GM12878 (cell line): ENCODE measurements at regions of chr13 and their contacts with region 1.

Region 1: GRCh38 chr13:40777166-40777808 is 6.3 kb upstream of the MRPS31 start:
- DNase-seq: no peak
- ATAC-seq: peak; percentile 95
- H3K4me3 ChIP-seq: no peak overlapping the region
- H3K27ac ChIP-seq: peak overlapping the region; percentile 17; the same call in 1 of the 2 replicates
- H3K4me1 ChIP-seq: peaks cover 11% of the 10 kb centered on the region
- H3K27me3 ChIP-seq: no peaks in the 10 kb centered on the region
- CTCF ChIP-seq: peak; percentile 53 to 60 (median 57)
- EP300 ChIP-seq: no peak
- POLR2A ChIP-seq: no peak
- RAD21 ChIP-seq: peak; percentile 73

Region 2: DNA sequence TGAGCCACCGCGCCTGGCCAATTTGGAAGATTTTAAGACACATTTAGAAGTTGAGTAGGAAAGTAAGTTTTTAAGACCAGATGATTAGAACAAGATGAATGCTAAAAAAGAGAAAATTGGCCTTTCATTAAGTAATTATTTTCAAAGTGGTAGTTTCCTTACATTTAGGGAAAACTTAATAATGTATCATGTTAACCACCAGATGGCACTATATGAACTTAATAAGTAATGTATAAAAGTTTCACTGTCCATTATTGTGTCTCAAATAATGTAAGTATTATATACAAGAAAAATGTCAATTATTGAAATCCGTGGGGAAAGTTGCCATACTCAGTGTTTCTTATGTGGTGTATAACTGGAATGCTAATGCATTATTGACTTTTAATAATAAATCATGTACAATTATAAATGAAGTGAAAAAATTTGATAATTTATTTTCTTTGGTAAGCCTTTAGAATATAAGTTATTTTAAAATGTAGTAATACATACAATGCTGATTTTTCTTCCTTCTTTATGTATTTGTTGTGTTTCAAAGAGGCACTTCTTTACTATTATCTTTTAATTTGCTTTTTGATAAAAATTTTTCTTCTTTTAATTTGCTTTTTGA is 1092.7 kb before region 1 on chr13:
- CTCF ChIA-PET with region 1: interaction called, 19 read pairs
- POLR2A ChIA-PET with region 1: no interaction called
- RAD21 ChIA-PET with region 1: interaction called, 3 read pairs
- SMC1A ChIA-PET with region 1: interaction called, 13 read pairs
- in situ Hi-C with region 1: no loop called
- intact Hi-C with region 1: loop called (anchors 5 kb)
- DNase-seq: no peak
- ATAC-seq: peak; percentile 60
- H3K4me3 ChIP-seq: no peak overlapping the region
- H3K27ac ChIP-seq: no peak overlapping the region
- H3K4me1 ChIP-seq: peaks cover 6% of the 10 kb centered on the region; the same call in 1 of the 2 replicates
- H3K27me3 ChIP-seq: no peaks in the 10 kb centered on the region
- CTCF ChIP-seq: peak in 1 of 3 experiments; percentile 18; a peak in 2 of 6 replicates
- EP300 ChIP-seq: no peak
- POLR2A ChIP-seq: no peak
- RAD21 ChIP-seq: peak; percentile 22; the same call in 1 of the 2 replicates

Region 3: DNA sequence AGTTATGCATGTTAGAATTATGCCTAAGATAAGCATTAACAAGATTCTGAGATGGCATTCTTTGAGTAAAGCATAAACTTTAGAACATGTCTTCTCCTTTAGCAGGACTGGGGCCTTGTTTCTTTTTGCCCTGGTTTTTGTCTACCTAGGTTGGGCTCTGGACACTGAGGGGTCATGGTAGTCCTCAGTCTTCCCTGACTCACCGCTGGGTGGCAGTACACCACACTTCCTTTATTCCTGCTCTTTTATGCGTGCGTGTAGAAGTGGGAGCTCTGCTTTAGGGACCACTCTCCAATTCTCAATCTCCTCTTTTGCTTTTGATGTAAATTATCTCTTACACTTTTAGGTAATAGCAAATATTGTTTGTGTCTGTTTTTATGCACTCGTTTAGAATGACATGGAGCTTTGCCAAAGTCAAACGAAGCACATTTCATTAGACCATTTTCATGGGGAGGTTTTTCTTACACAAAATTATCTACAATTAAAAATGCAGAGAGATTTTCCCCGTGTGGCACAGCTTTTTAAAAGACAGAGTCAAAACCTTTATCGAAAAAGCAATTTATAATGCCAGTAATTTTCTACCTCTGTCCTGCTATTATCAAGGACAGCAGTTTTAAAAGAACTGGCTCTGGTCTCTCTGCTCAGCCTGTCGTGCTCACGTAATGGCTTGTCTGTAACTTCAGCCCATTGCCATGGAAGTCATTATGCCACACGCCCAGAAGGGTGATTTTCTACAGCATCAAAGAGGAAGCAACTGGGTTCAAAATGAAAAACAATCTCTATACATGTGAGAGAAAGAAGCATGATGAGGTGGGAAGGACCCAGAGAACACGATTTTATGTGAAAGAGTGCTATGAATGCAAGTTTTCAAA is 707.9 kb before region 1 on chr13:
- CTCF ChIA-PET with region 1: interaction called, 28 read pairs
- POLR2A ChIA-PET with region 1: no interaction called
- RAD21 ChIA-PET with region 1: interaction called, 10 read pairs
- SMC1A ChIA-PET with region 1: interaction called, 10 read pairs
- in situ Hi-C with region 1: loop called (anchors 5 kb)
- intact Hi-C with region 1: loop called (anchors 5 kb)
- DNase-seq: no peak
- ATAC-seq: peak; percentile 92
- H3K4me3 ChIP-seq: no peak overlapping the region
- H3K27ac ChIP-seq: no peak overlapping the region
- H3K4me1 ChIP-seq: no peaks in the 10 kb centered on the region
- H3K27me3 ChIP-seq: peaks cover 0 to 8% of the 10 kb centered on the region in 2 experiments; a peak in 1 of 4 replicates
- CTCF ChIP-seq: peak; percentile 76 to 81 (median 79)
- EP300 ChIP-seq: no peak
- POLR2A ChIP-seq: no peak
- RAD21 ChIP-seq: peak; percentile 82

Region 4: DNA sequence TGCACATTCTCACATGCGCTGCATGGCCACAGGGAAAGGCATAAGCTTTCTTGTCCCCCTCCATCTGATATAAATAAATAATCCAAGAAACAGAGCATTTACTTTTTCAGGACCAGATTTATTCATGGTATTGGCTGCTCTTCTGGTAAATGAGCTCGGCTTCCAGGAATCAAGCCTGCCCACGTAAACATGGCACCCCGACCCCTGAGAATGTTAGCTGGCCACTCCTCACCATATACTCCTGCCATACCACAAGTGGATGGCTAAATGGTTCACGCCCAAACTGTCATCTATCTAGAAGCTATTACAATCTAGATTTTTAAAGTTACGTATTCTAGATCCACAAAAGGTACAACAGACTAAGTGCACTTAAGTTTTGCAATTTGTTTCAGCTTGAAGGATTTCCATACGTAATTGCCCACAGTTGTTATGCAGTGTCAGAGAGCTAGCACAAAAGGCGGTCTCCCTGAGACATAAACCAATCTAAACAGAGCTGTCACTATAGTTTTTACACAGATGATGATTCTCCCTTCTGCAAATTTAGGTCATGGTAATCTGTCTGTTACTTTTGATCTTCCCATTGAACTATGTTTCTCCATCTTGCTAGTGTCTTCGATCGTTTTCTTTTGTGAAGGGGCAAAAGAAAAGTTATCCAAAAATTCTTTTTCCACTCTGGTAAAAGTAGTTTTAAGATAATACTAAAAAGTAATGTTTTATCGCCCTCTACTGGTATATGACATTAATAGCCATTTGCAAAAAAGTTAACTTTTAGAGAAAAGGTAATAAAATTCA is 94.6 kb before region 1 on chr13:
- CTCF ChIA-PET with region 1: interaction called, 26 read pairs
- POLR2A ChIA-PET with region 1: no interaction called
- RAD21 ChIA-PET with region 1: interaction called, 19 read pairs
- SMC1A ChIA-PET with region 1: interaction called, 12 read pairs
- in situ Hi-C with region 1: no loop called
- intact Hi-C with region 1: loop called (anchors 5 kb)
- DNase-seq: no peak
- ATAC-seq: peak; percentile 65
- H3K4me3 ChIP-seq: no peak overlapping the region
- H3K27ac ChIP-seq: no peak overlapping the region
- H3K4me1 ChIP-seq: no peaks in the 10 kb centered on the region
- H3K27me3 ChIP-seq: peaks cover 0 to 3% of the 10 kb centered on the region in 2 experiments; a peak in 1 of 4 replicates
- CTCF ChIP-seq: peak in 1 of 3 experiments; percentile 48; a peak in 4 of 6 replicates
- EP300 ChIP-seq: no peak; a peak in 1 of 4 replicates
- POLR2A ChIP-seq: no peak
- RAD21 ChIP-seq: peak; percentile 55

Region 5: GRCh38 chr13:40789275-40790133 is 12.2 kb after region 1 on chr13 and contains the start of gene SLC25A15:
- CTCF ChIA-PET with region 1: interaction called, 36 read pairs
- POLR2A ChIA-PET with region 1: interaction called, 3 read pairs
- RAD21 ChIA-PET with region 1: interaction called, 8 read pairs
- SMC1A ChIA-PET with region 1: interaction called, 8 read pairs
- in situ Hi-C with region 1: no loop called
- intact Hi-C with region 1: no loop called
- DNase-seq: no peak
- ATAC-seq: peak; percentile 94
- H3K4me3 ChIP-seq: peak within 1 kb of the TSS; percentile 83
- H3K27ac ChIP-seq: peak within 1 kb of the TSS; percentile 56
- H3K4me1 ChIP-seq: peaks cover 17% of the 10 kb centered on the region
- H3K27me3 ChIP-seq: no peaks in the 10 kb centered on the region
- CTCF ChIP-seq: peak in 2 of 3 experiments; percentile 33 to 47; a peak in 3 of 6 replicates
- EP300 ChIP-seq: 0 out of 4 replicates have a peak, but pooled peaks of 1 of the 2 experiments have one; percentile 23
- POLR2A ChIP-seq: peak; percentile 76
- RAD21 ChIP-seq: peak; percentile 42
- polyA plus RNA-seq, gene SLC25A15: 2.7 to 3.6 TPM

Region 6: DNA sequence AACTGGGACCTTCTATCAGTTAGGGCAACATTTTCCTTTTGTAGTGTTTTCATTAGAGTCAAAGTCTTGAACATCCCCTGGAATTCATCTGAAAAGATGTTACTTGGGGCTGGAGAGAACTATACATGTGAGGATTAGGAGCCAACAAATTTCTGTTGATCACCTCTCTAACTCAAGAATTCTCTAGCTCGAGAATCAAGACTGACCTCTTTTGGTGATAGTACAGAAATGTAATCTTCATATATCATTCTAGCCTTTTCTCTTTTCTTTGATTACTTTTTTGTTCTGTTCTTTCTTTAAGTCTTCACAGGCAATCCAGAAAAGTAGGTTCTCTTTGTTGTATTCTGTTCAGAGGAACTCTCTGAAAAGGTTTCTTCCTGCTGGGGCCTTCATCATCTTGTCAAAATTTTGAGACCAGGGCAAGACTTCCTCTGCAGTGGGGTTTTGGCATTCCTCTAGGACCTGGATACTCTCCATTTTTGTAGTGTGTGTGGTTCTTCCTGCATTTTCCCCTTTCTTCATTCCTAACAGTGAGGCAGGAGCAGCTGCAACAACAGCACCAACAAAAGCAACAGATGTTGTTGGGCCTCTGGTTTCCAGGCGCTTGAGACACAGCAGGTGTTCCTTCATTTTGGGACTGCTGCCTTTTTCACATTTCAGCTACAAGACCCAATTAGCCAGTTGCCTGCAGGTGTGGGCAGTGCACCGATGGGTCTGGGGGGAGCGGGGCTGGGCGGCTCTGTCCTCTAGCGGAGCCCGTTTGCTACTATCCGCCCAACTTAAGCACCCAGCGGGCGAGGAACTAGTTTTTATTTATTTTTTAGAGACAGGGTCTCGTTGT is 215.6 kb after region 1 on chr13:
- CTCF ChIA-PET with region 1: interaction called, 18 read pairs
- POLR2A ChIA-PET with region 1: no interaction called
- RAD21 ChIA-PET with region 1: interaction called, 15 read pairs
- SMC1A ChIA-PET with region 1: interaction called, 11 read pairs
- in situ Hi-C with region 1: no loop called
- intact Hi-C with region 1: no loop called
- DNase-seq: no peak
- ATAC-seq: peak; percentile 34
- H3K4me3 ChIP-seq: no peak overlapping the region; the same call in 1 of the 2 replicates
- H3K27ac ChIP-seq: peak overlapping the region; percentile 92
- H3K4me1 ChIP-seq: peaks cover 46% of the 10 kb centered on the region
- H3K27me3 ChIP-seq: no peaks in the 10 kb centered on the region
- CTCF ChIP-seq: peak; percentile 10 to 49 (median 12); a peak in 4 of 6 replicates
- EP300 ChIP-seq: no peak
- POLR2A ChIP-seq: no peak
- RAD21 ChIP-seq: peak; percentile 51

Region 7: GRCh38 chr13:41720839-41721561 is 943.7 kb after region 1 on chr13:
- CTCF ChIA-PET with region 1: no interaction called
- POLR2A ChIA-PET with region 1: no interaction called
- RAD21 ChIA-PET with region 1: no interaction called
- SMC1A ChIA-PET with region 1: no interaction called
- in situ Hi-C with region 1: no loop called
- intact Hi-C with region 1: no loop called
- DNase-seq: no peak
- ATAC-seq: no peak
- H3K4me3 ChIP-seq: no peak overlapping the region
- H3K27ac ChIP-seq: no peak overlapping the region
- H3K4me1 ChIP-seq: no peaks in the 10 kb centered on the region
- H3K27me3 ChIP-seq: no peaks in the 10 kb centered on the region
- CTCF ChIP-seq: no peak
- EP300 ChIP-seq: no peak
- POLR2A ChIP-seq: no peak
- RAD21 ChIP-seq: no peak